Activated B cell treated with CpG ODN at 0.5 μM for 24 hours (primary cell): ENCODE measurements at regions of chr2 and their contacts with region 1.

Region 1: GRCh38 chr2:144402251-144402650 is 117.7 kb downstream of the ZEB2 start:
- DNase-seq: no peak
- ATAC-seq: no peak
- H3K4me3 Mint-ChIP-seq: no peak overlapping the region
- H3K27ac Mint-ChIP-seq: peak overlapping the region; percentile 1
- H3K4me1 Mint-ChIP-seq: peaks cover 21% of the 10 kb centered on the region
- H3K27me3 Mint-ChIP-seq: no peaks in the 10 kb centered on the region
- CTCF ChIP-seq: no peak

Region 2: GRCh38 chr2:143732076-143732475 is 670.2 kb before region 1 on chr2:
- CTCF ChIA-PET with region 1: no interaction called
- POLR2A ChIA-PET with region 1: no interaction called
- intact Hi-C with region 1: no loop called
- DNase-seq: no peak
- ATAC-seq: no peak
- H3K4me3 Mint-ChIP-seq: no peak overlapping the region
- H3K27ac Mint-ChIP-seq: no peak overlapping the region
- H3K4me1 Mint-ChIP-seq: peaks cover 41% of the 10 kb centered on the region
- H3K27me3 Mint-ChIP-seq: no peaks in the 10 kb centered on the region
- CTCF ChIP-seq: no peak

Region 3: DNA sequence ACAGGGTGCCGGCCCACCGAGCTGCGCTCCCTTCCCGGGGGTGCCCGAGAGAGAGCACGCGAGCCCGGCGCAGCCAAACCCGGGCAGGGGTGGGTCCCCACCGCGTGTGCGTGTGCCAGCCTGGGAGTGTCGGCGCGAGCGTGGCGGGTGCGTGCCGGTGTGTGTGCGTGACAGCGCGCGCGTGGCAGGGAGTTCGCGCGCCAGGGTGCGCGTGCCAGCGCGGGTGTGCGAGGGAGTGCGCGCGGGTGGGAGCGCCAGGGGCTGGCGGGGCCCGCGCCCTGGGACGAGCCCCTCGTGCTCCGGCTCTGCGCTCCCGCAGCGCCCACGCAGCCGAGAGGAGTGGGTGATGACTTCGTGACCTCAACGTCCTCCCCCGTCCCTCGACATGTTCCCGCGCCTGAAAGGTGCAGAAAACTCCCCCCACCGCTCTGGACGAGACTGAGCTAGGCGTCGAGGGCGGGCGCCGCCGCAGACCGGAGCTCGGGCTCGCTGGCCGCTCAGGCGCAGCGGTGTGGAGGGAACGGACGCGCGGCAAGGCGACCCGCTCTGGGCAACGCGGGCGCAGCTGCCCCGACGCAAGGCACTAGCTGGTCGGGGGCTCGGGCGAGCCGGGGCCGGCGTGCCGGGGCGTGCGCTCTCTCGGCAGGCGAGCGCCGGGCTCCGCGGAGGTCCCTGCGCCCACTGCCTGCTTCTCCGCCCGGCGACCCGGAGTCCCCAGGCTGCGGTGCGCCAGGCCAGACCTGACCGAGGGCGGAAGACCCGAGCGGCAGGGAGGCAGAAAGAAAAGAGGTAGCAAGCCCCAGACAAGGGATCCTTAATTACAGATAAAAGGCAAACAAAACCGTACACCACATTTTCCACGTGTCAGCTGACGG is 465.2 kb before region 1 on chr2:
- CTCF ChIA-PET with region 1: no interaction called
- POLR2A ChIA-PET with region 1: no interaction called
- intact Hi-C with region 1: loop called (anchors 10 kb)
- DNase-seq: peak; percentile 24
- ATAC-seq: peak; percentile 67
- H3K4me3 Mint-ChIP-seq: peak overlapping the region; percentile 70
- H3K27ac Mint-ChIP-seq: no peak overlapping the region
- H3K4me1 Mint-ChIP-seq: peaks cover 20% of the 10 kb centered on the region
- H3K27me3 Mint-ChIP-seq: peaks cover 19% of the 10 kb centered on the region
- CTCF ChIP-seq: no peak

Region 4: DNA sequence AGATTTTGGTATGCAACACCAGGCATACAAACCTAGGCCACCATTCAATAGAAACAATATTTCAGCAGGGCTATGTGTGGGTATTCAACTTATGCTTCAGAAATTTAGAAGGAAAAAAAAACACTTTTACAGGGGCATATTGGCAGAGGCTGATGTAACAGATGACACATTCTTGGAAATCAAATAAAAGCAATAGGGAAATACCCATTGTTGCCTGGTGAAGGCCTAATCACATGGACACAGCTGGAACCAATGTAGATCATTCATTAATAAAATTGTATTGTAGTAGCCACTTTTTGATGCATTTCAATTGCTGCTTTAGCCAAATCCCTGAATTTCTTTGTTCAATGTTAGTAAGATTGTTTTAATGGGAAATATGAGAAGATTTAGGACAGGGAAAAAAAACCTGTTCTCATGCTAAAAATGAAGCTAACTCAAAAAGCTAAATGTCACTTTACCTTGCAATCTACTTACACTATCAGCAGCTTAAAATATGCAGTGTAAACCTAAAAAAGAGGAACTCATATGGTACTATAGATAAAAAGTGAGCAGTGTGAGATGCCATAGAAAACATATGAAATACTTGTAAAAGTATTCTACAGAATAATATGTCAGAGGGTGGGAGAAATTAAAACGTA is 171.7 kb before region 1 on chr2:
- CTCF ChIA-PET with region 1: no interaction called
- POLR2A ChIA-PET with region 1: no interaction called
- intact Hi-C with region 1: no loop called
- DNase-seq: no peak
- ATAC-seq: no peak
- H3K4me3 Mint-ChIP-seq: no peak overlapping the region
- H3K27ac Mint-ChIP-seq: no peak overlapping the region
- H3K4me1 Mint-ChIP-seq: peaks cover 42% of the 10 kb centered on the region
- H3K27me3 Mint-ChIP-seq: no peaks in the 10 kb centered on the region
- CTCF ChIP-seq: no peak